GM12878 (cell line): ENCODE measurements at regions of chr9 and their contacts with region 1.

Region 1: GRCh38 chr9:36023260-36024048 is 13.3 kb upstream of the RECK start:
- DNase-seq: peak; percentile 15
- ATAC-seq: peak; percentile 90
- H3K4me3 ChIP-seq: no peak overlapping the region
- H3K27ac ChIP-seq: no peak overlapping the region
- H3K4me1 ChIP-seq: peaks cover 3% of the 10 kb centered on the region; the same call in 1 of the 2 replicates
- H3K27me3 ChIP-seq: no peaks in the 10 kb centered on the region
- CTCF ChIP-seq: peak; percentile 83 to 85 (median 84)
- EP300 ChIP-seq: no peak
- POLR2A ChIP-seq: no peak
- RAD21 ChIP-seq: peak; percentile 83

Region 2: GRCh38 chr9:35664531-35665470 is 358.7 kb before region 1 on chr9 and contains the start of gene ARHGEF39:
- CTCF ChIA-PET with region 1: no interaction called
- POLR2A ChIA-PET with region 1: no interaction called
- RAD21 ChIA-PET with region 1: no interaction called
- SMC1A ChIA-PET with region 1: no interaction called
- in situ Hi-C with region 1: no loop called
- intact Hi-C with region 1: no loop called
- DNase-seq: no peak
- ATAC-seq: peak; percentile 92
- H3K4me3 ChIP-seq: peak within 1 kb of the TSS; percentile 79
- H3K27ac ChIP-seq: peak within 1 kb of the TSS; percentile 85
- H3K4me1 ChIP-seq: peaks cover 33% of the 10 kb centered on the region
- H3K27me3 ChIP-seq: no peaks in the 10 kb centered on the region
- CTCF ChIP-seq: peak; percentile 15 to 44 (median 18); a peak in 3 of 6 replicates
- EP300 ChIP-seq: no peak
- POLR2A ChIP-seq: peak; percentile 83
- RAD21 ChIP-seq: 0 out of 2 replicates have a peak, but pooled peaks have one; percentile 7
- polyA plus RNA-seq, gene ARHGEF39: 2.0 to 5.0 TPM

Region 3: DNA sequence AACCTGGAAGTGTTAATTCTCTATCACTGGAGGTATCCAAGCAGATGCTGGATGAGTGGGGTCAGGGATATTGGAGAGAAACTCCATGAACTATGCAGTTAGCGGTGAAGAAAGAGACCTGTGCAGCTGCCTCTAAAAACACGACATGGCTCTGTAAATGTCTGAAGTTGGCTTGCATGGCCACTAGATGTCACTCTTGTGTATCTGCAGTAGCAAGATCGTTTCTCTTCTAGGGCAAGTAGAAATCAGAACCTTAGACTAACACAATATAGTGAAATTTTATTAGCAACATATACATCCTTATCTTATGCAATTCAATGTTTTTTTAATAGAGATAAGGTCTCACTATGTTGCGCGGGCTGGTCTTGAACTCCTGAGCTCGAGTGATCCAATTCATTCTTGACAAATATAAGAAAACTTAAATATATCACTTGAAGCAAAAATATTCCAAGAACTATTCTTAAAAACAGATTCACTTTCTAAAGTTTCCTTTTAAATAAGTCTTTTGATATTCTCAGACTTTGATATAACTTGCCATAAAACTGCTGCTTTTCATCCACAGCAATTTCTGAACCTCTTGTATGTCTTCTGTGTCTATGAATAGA is 68.4 kb before region 1 on chr9:
- CTCF ChIA-PET with region 1: interaction called, 100 read pairs
- POLR2A ChIA-PET with region 1: no interaction called
- RAD21 ChIA-PET with region 1: interaction called, 16 read pairs
- SMC1A ChIA-PET with region 1: interaction called, 21 read pairs
- in situ Hi-C with region 1: loop called (anchors 5 kb)
- intact Hi-C with region 1: loop called (anchors 1 kb)
- DNase-seq: no peak
- ATAC-seq: peak; percentile 88
- H3K4me3 ChIP-seq: no peak overlapping the region
- H3K27ac ChIP-seq: no peak overlapping the region
- H3K4me1 ChIP-seq: no peaks in the 10 kb centered on the region
- H3K27me3 ChIP-seq: no peaks in the 10 kb centered on the region; a peak in 1 of 4 replicates
- CTCF ChIP-seq: peak; percentile 83 to 87 (median 85)
- EP300 ChIP-seq: no peak
- POLR2A ChIP-seq: no peak
- RAD21 ChIP-seq: peak; percentile 91

Region 4: GRCh38 chr9:36008774-36009300 is 14.6 kb before region 1 on chr9:
- CTCF ChIA-PET with region 1: interaction called, 98 read pairs
- POLR2A ChIA-PET with region 1: no interaction called
- RAD21 ChIA-PET with region 1: interaction called, 6 read pairs
- SMC1A ChIA-PET with region 1: interaction called, 16 read pairs
- in situ Hi-C with region 1: no loop called
- intact Hi-C with region 1: no loop called
- DNase-seq: no peak
- ATAC-seq: peak; percentile 90
- H3K4me3 ChIP-seq: no peak overlapping the region
- H3K27ac ChIP-seq: no peak overlapping the region
- H3K4me1 ChIP-seq: peaks cover 22% of the 10 kb centered on the region
- H3K27me3 ChIP-seq: peaks cover 0 to 10% of the 10 kb centered on the region in 2 experiments; a peak in 3 of 4 replicates
- CTCF ChIP-seq: peak; percentile 70 to 83 (median 82)
- EP300 ChIP-seq: no peak
- POLR2A ChIP-seq: no peak
- RAD21 ChIP-seq: peak; percentile 54

Region 5: GRCh38 chr9:36045610-36046009 is 22.2 kb after region 1 on chr9:
- CTCF ChIA-PET with region 1: no interaction called
- POLR2A ChIA-PET with region 1: no interaction called
- RAD21 ChIA-PET with region 1: no interaction called
- SMC1A ChIA-PET with region 1: no interaction called
- in situ Hi-C with region 1: no loop called
- intact Hi-C with region 1: no loop called
- DNase-seq: no peak
- ATAC-seq: no peak
- H3K4me3 ChIP-seq: no peak overlapping the region
- H3K27ac ChIP-seq: no peak overlapping the region
- H3K4me1 ChIP-seq: no peaks in the 10 kb centered on the region
- H3K27me3 ChIP-seq: no peaks in the 10 kb centered on the region; a peak in 1 of 4 replicates
- CTCF ChIP-seq: no peak
- EP300 ChIP-seq: no peak
- POLR2A ChIP-seq: no peak
- RAD21 ChIP-seq: no peak

Region 6: DNA sequence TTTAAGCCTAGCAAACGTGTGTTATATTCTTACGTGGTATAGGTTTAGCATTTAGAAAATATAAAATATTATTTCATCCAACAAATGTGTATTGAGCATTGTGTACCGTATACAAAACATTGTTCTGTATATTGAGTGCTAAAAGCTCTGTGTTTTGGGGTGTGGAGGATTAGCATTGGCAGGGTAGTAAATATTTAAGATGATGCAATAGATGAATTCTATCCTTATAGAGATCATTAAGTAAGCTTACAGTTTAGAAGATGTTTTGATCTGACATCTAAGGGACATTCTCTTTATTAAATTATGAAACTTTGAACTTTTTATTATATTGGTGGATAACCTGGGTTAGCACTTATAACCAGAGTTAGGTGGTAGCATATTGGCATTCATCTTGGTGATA is 64.6 kb after region 1 on chr9:
- CTCF ChIA-PET with region 1: no interaction called
- POLR2A ChIA-PET with region 1: no interaction called
- RAD21 ChIA-PET with region 1: no interaction called
- SMC1A ChIA-PET with region 1: no interaction called
- in situ Hi-C with region 1: no loop called
- intact Hi-C with region 1: no loop called
- DNase-seq: no peak
- ATAC-seq: no peak
- H3K4me3 ChIP-seq: no peak overlapping the region
- H3K27ac ChIP-seq: no peak overlapping the region
- H3K4me1 ChIP-seq: peaks cover 4% of the 10 kb centered on the region
- H3K27me3 ChIP-seq: no peaks in the 10 kb centered on the region
- CTCF ChIP-seq: no peak
- EP300 ChIP-seq: no peak
- POLR2A ChIP-seq: no peak
- RAD21 ChIP-seq: no peak

Region 7: GRCh38 chr9:36148311-36149051 is 125.0 kb after region 1 on chr9:
- CTCF ChIA-PET with region 1: no interaction called
- POLR2A ChIA-PET with region 1: no interaction called
- RAD21 ChIA-PET with region 1: no interaction called
- SMC1A ChIA-PET with region 1: no interaction called
- in situ Hi-C with region 1: no loop called
- intact Hi-C with region 1: no loop called
- DNase-seq: peak; percentile 76
- ATAC-seq: peak; percentile 80
- H3K4me3 ChIP-seq: no peak overlapping the region
- H3K27ac ChIP-seq: no peak overlapping the region; the same call in none of the 2 replicates
- H3K4me1 ChIP-seq: peaks cover 70% of the 10 kb centered on the region
- H3K27me3 ChIP-seq: no peaks in the 10 kb centered on the region
- CTCF ChIP-seq: no peak
- EP300 ChIP-seq: no peak
- POLR2A ChIP-seq: no peak
- RAD21 ChIP-seq: 0 out of 2 replicates have a peak, but pooled peaks have one; percentile 5